PC-3 (cell line): ENCODE measurements at regions of chr14 and their contacts with region 1.

Region 1: GRCh38 chr14:61196792-61197191 is 84.3 kb downstream of the TMEM30B start:
- DNase-seq: peak; percentile 66
- ATAC-seq: peak; percentile 95
- H3K4me3 ChIP-seq: no peak overlapping the region
- H3K27ac ChIP-seq: no peak overlapping the region
- H3K4me1 ChIP-seq: no peaks in the 10 kb centered on the region
- H3K27me3 ChIP-seq: no peaks in the 10 kb centered on the region
- CTCF ChIP-seq: peak; percentile 76

Region 2: DNA sequence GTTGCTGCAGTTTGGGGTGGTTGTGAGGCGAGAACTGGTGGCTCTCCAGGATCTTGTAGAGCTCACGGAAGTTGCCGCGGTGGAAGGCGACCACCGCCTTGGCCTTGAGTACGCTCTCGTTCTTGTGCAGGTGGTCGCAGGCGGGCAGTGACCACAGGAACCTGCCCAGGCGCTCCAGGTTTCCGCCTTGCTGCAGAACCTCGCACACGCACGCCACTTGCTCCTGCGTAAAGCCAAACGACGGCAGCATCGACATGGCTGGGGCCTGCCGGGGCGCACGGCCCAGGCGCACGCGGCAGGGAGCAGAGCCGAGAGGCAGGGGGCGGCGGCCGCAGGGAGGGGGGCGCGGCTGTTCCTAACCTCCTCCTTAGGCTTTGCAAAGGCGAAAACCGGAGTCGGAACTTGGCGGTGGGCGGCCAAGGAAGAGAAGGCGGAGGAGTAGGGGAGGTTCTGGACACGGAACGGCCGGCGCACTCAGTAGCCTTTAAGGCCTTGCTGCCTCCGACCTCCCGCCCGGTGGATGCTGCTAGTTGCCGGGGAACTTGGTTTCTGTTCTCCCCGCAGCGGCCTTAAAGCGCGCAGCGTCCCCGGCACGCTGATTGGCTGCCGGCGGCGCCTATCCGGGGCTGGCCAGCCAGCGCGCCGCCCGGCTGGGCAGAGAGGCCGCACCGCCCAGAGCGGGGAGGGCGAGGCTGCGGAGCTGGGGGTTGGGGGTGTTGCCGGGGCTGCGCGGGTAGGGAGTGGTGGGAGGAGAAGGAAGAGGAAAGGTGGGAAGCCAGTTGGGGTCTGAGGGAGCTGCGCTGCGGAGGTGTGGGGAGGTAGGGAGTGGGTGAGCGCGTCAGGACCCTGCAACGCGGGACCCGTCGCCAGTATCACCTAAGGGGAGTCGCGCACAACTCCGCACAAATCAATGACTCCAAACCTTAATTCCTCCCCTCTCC is 547.6 kb before region 1 on chr14 and contains the start of gene SIX1:
- CTCF ChIA-PET with region 1: no interaction called
- POLR2A ChIA-PET with region 1: no interaction called
- intact Hi-C with region 1: loop called (anchors 5 kb)
- DNase-seq: peak; percentile 97
- ATAC-seq: peak; percentile 78
- H3K4me3 ChIP-seq: peak within 1 kb of the TSS; percentile 75
- H3K27ac ChIP-seq: 0 out of 2 replicates have a peak within 1 kb of the TSS, but pooled peaks have one; percentile 6
- H3K4me1 ChIP-seq: peaks cover 21% of the 10 kb centered on the region
- H3K27me3 ChIP-seq: no peaks in the 10 kb centered on the region
- CTCF ChIP-seq: no peak
- total RNA-seq, gene SIX1: 16.5 and 18.2 TPM in 2 replicates

Region 3: GRCh38 chr14:60734465-60735242 is 462.1 kb before region 1 on chr14 and contains the start of gene MNAT1:
- CTCF ChIA-PET with region 1: no interaction called
- POLR2A ChIA-PET with region 1: no interaction called
- intact Hi-C with region 1: loop called (anchors 5 kb)
- DNase-seq: peak; percentile 95
- ATAC-seq: peak; percentile 84
- H3K4me3 ChIP-seq: peak within 1 kb of the TSS; percentile 94
- H3K27ac ChIP-seq: no peak within 1 kb of the TSS
- H3K4me1 ChIP-seq: peaks cover 15% of the 10 kb centered on the region
- H3K27me3 ChIP-seq: no peaks in the 10 kb centered on the region
- CTCF ChIP-seq: no peak
- total RNA-seq, gene MNAT1: 88.6 and 95.7 TPM in 2 replicates

Region 4: GRCh38 chr14:60862286-60862685 is 334.5 kb before region 1 on chr14:
- CTCF ChIA-PET with region 1: no interaction called
- POLR2A ChIA-PET with region 1: no interaction called
- intact Hi-C with region 1: loop called (anchors 5 kb)
- DNase-seq: peak; percentile 92
- ATAC-seq: peak; percentile 57
- H3K4me3 ChIP-seq: no peak overlapping the region
- H3K27ac ChIP-seq: no peak overlapping the region
- H3K4me1 ChIP-seq: peaks cover 20% of the 10 kb centered on the region
- H3K27me3 ChIP-seq: no peaks in the 10 kb centered on the region
- CTCF ChIP-seq: no peak